B cell (primary cell): ENCODE measurements at regions of chr13 and their contacts with region 1.

Region 1: GRCh38 chr13:42271337-42272114 is 426 bp upstream of the AKAP11 start:
- DNase-seq: peak; percentile 99
- ATAC-seq: peak; percentile 81
- H3K4me3 ChIP-seq: peak overlapping the region; percentile 17 to 78 (median 72)
- H3K4me3 Mint-ChIP-seq: peak overlapping the region; percentile 97
- H3K27ac ChIP-seq: peak overlapping the region; percentile 91 to 96
- H3K27ac Mint-ChIP-seq: peak overlapping the region; percentile 98
- H3K4me1 ChIP-seq: peaks cover 41 to 48% of the 10 kb centered on the region in 2 donors
- H3K4me1 Mint-ChIP-seq: peaks cover 44% of the 10 kb centered on the region
- H3K27me3 ChIP-seq: no peaks in the 10 kb centered on the region
- H3K27me3 Mint-ChIP-seq: no peaks in the 10 kb centered on the region
- CTCF ChIP-seq: no peak

Region 2: DNA sequence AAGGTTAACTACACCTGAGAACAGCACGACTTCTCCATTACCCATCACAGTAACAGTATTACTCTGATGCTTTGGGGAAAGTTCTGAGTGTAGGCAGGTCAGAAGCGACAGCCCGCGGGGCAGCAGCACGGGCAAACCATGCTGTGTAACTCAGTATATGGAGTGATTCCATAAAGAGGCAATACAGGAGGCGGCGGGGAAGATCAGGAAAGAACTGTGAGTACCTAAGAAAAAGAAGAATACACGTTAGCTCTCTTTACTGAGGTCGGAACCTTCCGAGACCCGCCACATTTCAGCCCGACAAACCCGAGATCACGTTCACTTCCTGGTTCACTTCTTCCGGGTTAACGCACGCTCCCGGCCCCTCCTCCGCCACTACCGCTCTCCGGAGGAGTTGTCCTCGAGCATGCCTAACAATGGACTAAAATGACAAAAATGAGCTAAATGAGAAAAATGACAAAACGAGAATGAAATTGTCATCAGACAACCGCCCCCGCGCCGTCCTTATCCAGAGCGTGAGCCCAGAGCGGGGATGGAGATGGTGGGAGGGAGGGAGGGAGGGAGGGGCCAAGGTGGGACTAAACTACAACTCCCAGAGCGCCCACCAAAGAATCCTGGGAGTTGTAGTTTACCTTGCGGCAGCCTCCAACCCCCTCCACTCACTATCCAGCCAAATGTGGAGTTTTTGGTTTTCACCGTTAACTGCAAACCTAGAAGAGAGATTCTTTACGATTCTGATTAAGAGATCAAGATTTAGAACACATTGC is 1008.1 kb before region 1 on chr13 and contains the start of gene MTRF1:
- CTCF ChIA-PET with region 1: no interaction called
- POLR2A ChIA-PET with region 1: no interaction called
- intact Hi-C with region 1: loop called (anchors 2 kb)
- DNase-seq: peak; percentile 92
- ATAC-seq: peak; percentile 92
- H3K4me3 ChIP-seq: peak within 1 kb of the TSS; percentile 62 to 95 (median 76)
- H3K4me3 Mint-ChIP-seq: peak within 1 kb of the TSS; percentile 96
- H3K27ac ChIP-seq: peak within 1 kb of the TSS; percentile 79 to 92
- H3K27ac Mint-ChIP-seq: peak within 1 kb of the TSS; percentile 98
- H3K4me1 ChIP-seq: peaks cover 6 to 7% of the 10 kb centered on the region in 2 donors
- H3K4me1 Mint-ChIP-seq: peaks cover 21% of the 10 kb centered on the region
- H3K27me3 ChIP-seq: no peaks in the 10 kb centered on the region
- H3K27me3 Mint-ChIP-seq: no peaks in the 10 kb centered on the region
- CTCF ChIP-seq: no peak
- total RNA-seq, gene MTRF1: 29.8 and 36.0 TPM in 2 replicates

Region 3: GRCh38 chr13:42028113-42028799 is 243.3 kb before region 1 on chr13:
- CTCF ChIA-PET with region 1: no interaction called
- POLR2A ChIA-PET with region 1: no interaction called
- intact Hi-C with region 1: no loop called
- DNase-seq: no peak
- ATAC-seq: no peak
- H3K4me3 ChIP-seq: no peak overlapping the region
- H3K4me3 Mint-ChIP-seq: no peak overlapping the region
- H3K27ac ChIP-seq: no peak overlapping the region
- H3K27ac Mint-ChIP-seq: no peak overlapping the region
- H3K4me1 ChIP-seq: no peaks in the 10 kb centered on the region
- H3K4me1 Mint-ChIP-seq: no peaks in the 10 kb centered on the region
- H3K27me3 ChIP-seq: peaks cover 0 to 15% (median 8%) of the 10 kb centered on the region in 4 experiments
- H3K27me3 Mint-ChIP-seq: peaks cover 30% of the 10 kb centered on the region
- CTCF ChIP-seq: no peak

Region 4: GRCh38 chr13:42039946-42040729 is 231.4 kb before region 1 on chr13:
- CTCF ChIA-PET with region 1: no interaction called
- POLR2A ChIA-PET with region 1: no interaction called
- intact Hi-C with region 1: loop called (anchors 5 kb)
- DNase-seq: peak; percentile 82
- ATAC-seq: peak; percentile 83
- H3K4me3 ChIP-seq: peak overlapping the region; percentile 61 to 75 (median 66)
- H3K4me3 Mint-ChIP-seq: peak overlapping the region; percentile 93
- H3K27ac ChIP-seq: peak overlapping the region in 1 of 2 donors; percentile 45
- H3K27ac Mint-ChIP-seq: peak overlapping the region; percentile 81
- H3K4me1 ChIP-seq: peaks cover 11 to 19% of the 10 kb centered on the region in 2 donors
- H3K4me1 Mint-ChIP-seq: peaks cover 20% of the 10 kb centered on the region
- H3K27me3 ChIP-seq: peaks cover 0 to 23% (median 11%) of the 10 kb centered on the region in 4 experiments
- H3K27me3 Mint-ChIP-seq: peaks cover 12% of the 10 kb centered on the region
- CTCF ChIP-seq: no peak

Region 5: DNA sequence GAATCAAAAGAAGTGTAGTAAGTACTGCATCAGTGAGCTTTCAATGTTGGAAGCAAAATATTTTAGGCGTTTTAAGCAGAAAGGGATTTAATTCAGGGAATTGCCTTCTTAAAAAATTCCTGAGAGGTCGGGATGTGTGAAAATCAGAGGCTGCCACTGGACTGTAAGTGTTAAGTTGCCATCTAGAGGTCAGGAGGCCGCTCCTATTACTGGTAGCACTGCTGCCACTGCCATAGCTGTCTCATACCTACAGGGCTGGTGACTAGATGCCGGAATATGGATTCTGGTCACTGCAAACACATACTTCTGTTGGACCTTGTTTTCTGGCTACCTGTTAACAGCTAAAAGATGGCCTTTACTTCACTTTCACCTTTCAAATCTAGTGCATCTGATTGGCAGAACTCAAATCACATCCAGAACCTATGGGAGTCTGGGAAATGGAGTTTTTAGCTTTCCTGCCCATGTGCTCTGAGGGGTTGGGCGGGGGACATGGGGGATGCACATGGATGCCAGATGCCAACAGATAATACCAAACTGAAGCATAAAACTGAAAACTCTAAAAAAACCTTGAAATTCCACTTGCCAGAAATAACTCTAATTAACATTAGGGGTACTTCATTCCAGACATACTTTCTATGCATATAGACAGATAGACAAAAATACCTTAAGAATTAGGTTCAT is 193.3 kb before region 1 on chr13:
- CTCF ChIA-PET with region 1: no interaction called
- POLR2A ChIA-PET with region 1: no interaction called
- intact Hi-C with region 1: no loop called
- DNase-seq: no peak
- ATAC-seq: no peak
- H3K4me3 ChIP-seq: no peak overlapping the region
- H3K4me3 Mint-ChIP-seq: no peak overlapping the region
- H3K27ac ChIP-seq: no peak overlapping the region
- H3K27ac Mint-ChIP-seq: no peak overlapping the region
- H3K4me1 ChIP-seq: no peaks in the 10 kb centered on the region
- H3K4me1 Mint-ChIP-seq: no peaks in the 10 kb centered on the region
- H3K27me3 ChIP-seq: no peaks in the 10 kb centered on the region
- H3K27me3 Mint-ChIP-seq: no peaks in the 10 kb centered on the region
- CTCF ChIP-seq: no peak

Region 6: GRCh38 chr13:43041369-43041921 is 769.9 kb after region 1 on chr13:
- CTCF ChIA-PET with region 1: no interaction called
- POLR2A ChIA-PET with region 1: no interaction called
- intact Hi-C with region 1: loop called (anchors 10 kb)
- DNase-seq: no peak
- ATAC-seq: peak; percentile 24
- H3K4me3 ChIP-seq: no peak overlapping the region
- H3K4me3 Mint-ChIP-seq: peak overlapping the region; percentile 52
- H3K27ac ChIP-seq: peak overlapping the region in 1 of 2 donors; percentile 38
- H3K27ac Mint-ChIP-seq: peak overlapping the region; percentile 83
- H3K4me1 ChIP-seq: peaks cover 50 to 55% of the 10 kb centered on the region in 2 donors
- H3K4me1 Mint-ChIP-seq: peaks cover 71% of the 10 kb centered on the region
- H3K27me3 ChIP-seq: no peaks in the 10 kb centered on the region
- H3K27me3 Mint-ChIP-seq: no peaks in the 10 kb centered on the region
- CTCF ChIP-seq: no peak

Region 7: GRCh38 chr13:44045180-44045562 is 1773.6 kb after region 1 on chr13:
- CTCF ChIA-PET with region 1: no interaction called
- POLR2A ChIA-PET with region 1: no interaction called
- intact Hi-C with region 1: no loop called
- DNase-seq: no peak
- ATAC-seq: no peak
- H3K4me3 ChIP-seq: no peak overlapping the region
- H3K4me3 Mint-ChIP-seq: no peak overlapping the region
- H3K27ac ChIP-seq: no peak overlapping the region
- H3K27ac Mint-ChIP-seq: no peak overlapping the region
- H3K4me1 ChIP-seq: no peaks in the 10 kb centered on the region
- H3K4me1 Mint-ChIP-seq: no peaks in the 10 kb centered on the region
- H3K27me3 ChIP-seq: peaks cover 0 to 4% (median 2%) of the 10 kb centered on the region in 4 experiments
- H3K27me3 Mint-ChIP-seq: peaks cover 38% of the 10 kb centered on the region
- CTCF ChIP-seq: no peak

Region 8: GRCh38 chr13:44274452-44275205 is 2003.1 kb after region 1 on chr13:
- CTCF ChIA-PET with region 1: no interaction called
- POLR2A ChIA-PET with region 1: no interaction called
- intact Hi-C with region 1: loop called (anchors 10 kb)
- DNase-seq: peak; percentile 82
- ATAC-seq: peak; percentile 84
- H3K4me3 ChIP-seq: peak overlapping the region in 3 of 5 experiments; percentile 31 to 38 (median 35)
- H3K4me3 Mint-ChIP-seq: peak overlapping the region; percentile 65
- H3K27ac ChIP-seq: peak overlapping the region; percentile 74 to 83
- H3K27ac Mint-ChIP-seq: peak overlapping the region; percentile 85
- H3K4me1 ChIP-seq: peaks cover 29 to 44% of the 10 kb centered on the region in 2 donors
- H3K4me1 Mint-ChIP-seq: peaks cover 40% of the 10 kb centered on the region
- H3K27me3 ChIP-seq: no peaks in the 10 kb centered on the region
- H3K27me3 Mint-ChIP-seq: no peaks in the 10 kb centered on the region
- CTCF ChIP-seq: no peak